Ascending aorta (tissue), 2 donors: ENCODE measurements at regions of chr5 and their contacts with region 1.

Region 1: DNA sequence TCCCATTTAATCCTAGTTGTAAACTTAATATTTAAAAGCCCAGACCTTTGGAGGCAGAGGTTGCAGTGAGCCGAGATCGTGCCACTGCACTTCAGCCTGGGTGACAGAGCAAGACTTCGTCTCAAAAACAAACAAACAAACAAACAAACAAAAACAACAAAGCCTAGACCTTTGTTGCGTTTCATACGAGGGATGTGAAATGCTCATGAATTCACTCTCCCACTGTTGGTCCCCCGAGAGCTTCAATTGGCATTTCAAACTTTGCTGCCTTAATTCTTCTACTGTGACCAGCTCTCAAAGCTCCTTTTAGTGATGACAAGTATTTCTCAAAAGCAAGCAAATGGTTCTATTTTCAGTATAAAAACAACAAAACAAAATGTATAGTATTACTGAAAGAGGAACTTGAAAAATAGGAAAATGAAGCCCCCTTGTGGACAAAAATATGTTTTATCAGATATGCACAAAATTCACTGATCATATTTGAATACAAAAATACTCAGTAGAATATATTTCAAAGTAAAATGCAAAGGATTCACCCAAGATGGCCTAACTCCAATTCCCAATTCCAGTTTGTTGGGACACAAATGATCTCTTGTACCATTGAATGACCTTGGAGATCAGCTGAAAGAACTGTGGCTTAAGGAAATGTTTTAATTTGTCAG is 140.4 kb downstream of the ESM1 start:
- DNase-seq: no peak
- H3K4me3 ChIP-seq: peak overlapping the region; percentile 23 to 53
- H3K27ac ChIP-seq: peak overlapping the region; percentile 76 to 80
- H3K4me1 ChIP-seq: peaks cover 0 to 12% of the 10 kb centered on the region in 2 donors
- H3K27me3 ChIP-seq: no peaks in the 10 kb centered on the region
- CTCF ChIP-seq: peak; percentile 46 to 62 (median 55)

Region 2: GRCh38 chr5:54646356-54647101 is 198.5 kb before region 1 on chr5:
- intact Hi-C with region 1: loop called (anchors 2 kb)
- DNase-seq: peak; percentile 77 to 94
- H3K4me3 ChIP-seq: peak overlapping the region; percentile 34 to 55
- H3K27ac ChIP-seq: peak overlapping the region; percentile 89 to 93
- H3K4me1 ChIP-seq: peaks cover 17 to 50% of the 10 kb centered on the region in 2 donors
- H3K27me3 ChIP-seq: no peaks in the 10 kb centered on the region
- CTCF ChIP-seq: peak in 1 of 3 experiments; percentile 7

Region 3: DNA sequence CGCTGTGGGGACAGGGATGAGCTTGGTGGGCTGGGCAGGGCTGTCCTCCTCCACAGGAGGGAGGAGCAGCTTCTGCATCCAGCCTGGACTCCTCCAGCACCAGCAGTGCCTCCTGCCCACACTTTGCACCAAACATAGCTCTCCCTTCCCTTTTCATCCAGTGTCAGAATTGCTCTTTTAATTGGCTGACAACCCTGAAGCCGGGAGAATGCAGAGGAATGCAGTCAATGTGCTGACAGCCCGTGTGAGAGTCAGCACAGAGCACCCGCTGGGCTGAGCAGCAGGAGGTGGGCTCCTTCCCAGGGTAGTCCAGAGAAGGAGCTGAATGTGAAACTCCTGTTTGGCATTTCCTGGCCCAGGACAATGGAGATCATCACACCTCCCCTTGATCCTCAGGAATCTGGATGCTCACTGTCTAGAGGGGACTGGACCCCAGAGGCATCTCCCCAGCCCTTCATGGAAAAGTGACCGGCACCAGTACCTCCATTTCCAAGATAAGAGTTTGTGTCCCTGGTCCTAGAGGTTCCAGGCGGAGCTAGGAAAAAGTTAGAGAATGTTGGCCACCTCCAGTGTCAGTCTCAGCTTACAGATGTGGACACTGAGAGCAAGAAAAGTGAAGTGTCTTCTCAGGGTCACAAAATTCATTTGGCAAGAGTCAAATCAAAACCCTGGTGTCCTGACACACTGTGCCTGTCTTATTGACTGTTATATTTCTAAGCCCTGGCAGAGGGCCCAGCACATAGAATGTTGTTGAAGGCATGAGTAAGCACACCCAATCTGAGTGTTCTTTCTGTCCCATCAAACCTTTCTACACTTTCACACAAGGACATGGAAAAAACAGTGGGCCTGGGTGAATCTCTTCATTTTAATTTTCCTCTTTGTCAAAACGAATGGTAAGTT is 125.4 kb before region 1 on chr5:
- intact Hi-C with region 1: loop called (anchors 2 kb)
- DNase-seq: peak in 1 of 2 donors; percentile 85
- H3K4me3 ChIP-seq: peak overlapping the region; percentile 3 to 22
- H3K27ac ChIP-seq: peak overlapping the region; percentile 84 to 86
- H3K4me1 ChIP-seq: peaks cover 13 to 46% of the 10 kb centered on the region in 2 donors
- H3K27me3 ChIP-seq: no peaks in the 10 kb centered on the region
- CTCF ChIP-seq: no peak

Region 4: GRCh38 chr5:54867310-54867944 is 22.4 kb after region 1 on chr5:
- intact Hi-C with region 1: loop called (anchors 1 kb)
- DNase-seq: no peak
- H3K4me3 ChIP-seq: peak overlapping the region; percentile 28 to 50
- H3K27ac ChIP-seq: no peak overlapping the region
- H3K4me1 ChIP-seq: no peaks in the 10 kb centered on the region
- H3K27me3 ChIP-seq: no peaks in the 10 kb centered on the region
- CTCF ChIP-seq: peak; percentile 51 to 68 (median 63)

Region 5: GRCh38 chr5:55456216-55456895 is 611.3 kb after region 1 on chr5:
- intact Hi-C with region 1: no loop called
- DNase-seq: no peak
- H3K4me3 ChIP-seq: no peak overlapping the region
- H3K27ac ChIP-seq: peak overlapping the region in 1 of 2 donors; percentile 12
- H3K4me1 ChIP-seq: peaks cover 3% of the 10 kb centered on the region in 2 donors
- H3K27me3 ChIP-seq: no peaks in the 10 kb centered on the region
- CTCF ChIP-seq: no peak